ENCODE measurements at regions of chr2 and their contacts with region 1.

Region 1: DNA sequence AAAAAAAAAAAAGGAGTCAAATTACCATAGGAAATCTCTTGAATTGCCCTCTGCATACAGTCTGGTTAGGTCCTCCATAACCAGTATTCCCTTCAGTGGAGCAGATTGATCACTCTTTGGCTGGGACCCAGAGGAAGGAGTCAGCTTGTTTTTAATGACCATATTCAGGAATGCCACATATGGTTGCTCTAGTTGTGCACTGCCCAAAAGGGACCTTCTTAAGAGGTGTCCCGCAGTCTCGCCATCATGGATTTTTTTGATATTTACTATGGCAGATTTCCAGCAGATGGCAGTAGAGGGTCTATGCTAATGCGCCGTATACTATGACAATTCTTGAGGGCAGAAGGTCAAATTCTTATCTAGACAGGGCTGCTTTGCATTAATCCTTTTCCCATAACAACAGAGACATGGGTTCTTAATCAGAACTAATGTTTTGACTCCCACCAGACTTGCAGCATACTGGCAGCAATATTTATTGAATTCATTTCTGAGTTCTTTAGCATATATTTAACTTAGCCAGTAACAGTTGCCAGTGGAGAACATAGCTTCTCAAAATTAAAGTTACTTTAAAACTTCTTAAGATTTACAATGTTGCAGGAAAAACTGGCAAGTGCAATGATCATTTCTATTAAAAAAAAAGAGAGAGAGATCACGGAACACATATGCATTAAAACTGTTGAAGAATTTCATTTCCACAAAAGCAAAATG is 31.8 kb upstream of the INPP4A start:
- DNase-seq: peak; percentile 41
- H3K4me3 ChIP-seq: no peak overlapping the region
- H3K27ac ChIP-seq: no peak overlapping the region
- H3K4me1 ChIP-seq: no peaks in the 10 kb centered on the region
- H3K27me3 ChIP-seq: no peaks in the 10 kb centered on the region
- CTCF ChIP-seq: peak; percentile 39 to 73

Region 2: DNA sequence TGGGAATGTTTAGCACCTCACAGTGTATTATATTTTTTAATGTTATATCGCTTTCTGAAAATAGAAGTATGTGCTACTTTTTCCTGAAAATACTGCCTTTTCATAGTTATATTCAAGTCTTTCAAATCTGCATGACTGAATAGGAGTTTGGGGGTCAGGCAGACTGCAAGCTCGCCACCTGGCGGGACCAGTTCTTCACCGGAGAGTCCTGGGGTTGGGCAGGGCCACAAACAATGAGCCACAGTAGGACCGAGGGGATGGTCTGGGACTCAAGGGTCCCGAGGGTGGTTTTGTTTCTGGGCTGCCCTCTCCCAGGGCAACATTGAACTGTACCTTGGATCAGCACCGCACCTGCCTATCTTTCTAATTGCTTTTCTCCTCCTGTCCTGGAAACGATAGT is 255.3 kb before region 1 on chr2:
- CTCF ChIA-PET with region 1: no interaction called
- dilution Hi-C with region 1: no loop called
- in situ Hi-C with region 1: no loop called
- intact Hi-C with region 1: no loop called
- DNase-seq: no peak
- H3K4me3 ChIP-seq: no peak overlapping the region
- H3K27ac ChIP-seq: no peak overlapping the region
- H3K4me1 ChIP-seq: peaks cover 16% of the 10 kb centered on the region
- H3K27me3 ChIP-seq: no peaks in the 10 kb centered on the region
- CTCF ChIP-seq: no peak

Region 3: GRCh38 chr2:98378930-98379671 is 33.8 kb before region 1 on chr2:
- CTCF ChIA-PET with region 1: no interaction called
- dilution Hi-C with region 1: no loop called
- in situ Hi-C with region 1: no loop called
- intact Hi-C with region 1: no loop called
- DNase-seq: peak; percentile 84
- H3K4me3 ChIP-seq: no peak overlapping the region
- H3K27ac ChIP-seq: no peak overlapping the region
- H3K4me1 ChIP-seq: peaks cover 14% of the 10 kb centered on the region
- H3K27me3 ChIP-seq: peaks cover 28% of the 10 kb centered on the region
- CTCF ChIP-seq: no peak

Region 4: GRCh38 chr2:98444436-98445176 is 31.7 kb after region 1 on chr2 and contains the start of gene INPP4A:
- CTCF ChIA-PET with region 1: no interaction called
- dilution Hi-C with region 1: no loop called
- in situ Hi-C with region 1: no loop called
- intact Hi-C with region 1: no loop called
- DNase-seq: peak; percentile 48
- H3K4me3 ChIP-seq: peak within 1 kb of the TSS; percentile 69 to 88 (median 85)
- H3K27ac ChIP-seq: peak within 1 kb of the TSS; percentile 76
- H3K4me1 ChIP-seq: peaks cover 4% of the 10 kb centered on the region
- H3K27me3 ChIP-seq: no peaks in the 10 kb centered on the region
- CTCF ChIP-seq: peak in 1 of 2 donors; percentile 16
- total RNA-seq, gene INPP4A: 26.3 to 36.5 TPM

Region 5: GRCh38 chr2:98479959-98480524 is 67.1 kb after region 1 on chr2:
- CTCF ChIA-PET with region 1: interaction called, 3 read pairs
- dilution Hi-C with region 1: no loop called
- in situ Hi-C with region 1: no loop called
- intact Hi-C with region 1: loop called (anchors 2 kb)
- DNase-seq: peak; percentile 99
- H3K4me3 ChIP-seq: no peak overlapping the region
- H3K27ac ChIP-seq: peak overlapping the region; percentile 74
- H3K4me1 ChIP-seq: peaks cover 57% of the 10 kb centered on the region
- H3K27me3 ChIP-seq: no peaks in the 10 kb centered on the region
- CTCF ChIP-seq: no peak

Region 6: GRCh38 chr2:98577313-98577712 is 164.4 kb after region 1 on chr2:
- CTCF ChIA-PET with region 1: no interaction called
- dilution Hi-C with region 1: loop called (anchors 25 kb)
- in situ Hi-C with region 1: loop called in 1 of 2 experiments (anchors 25 kb)
- intact Hi-C with region 1: no loop called
- DNase-seq: no peak
- H3K4me3 ChIP-seq: no peak overlapping the region
- H3K27ac ChIP-seq: no peak overlapping the region
- H3K4me1 ChIP-seq: no peaks in the 10 kb centered on the region
- H3K27me3 ChIP-seq: no peaks in the 10 kb centered on the region
- CTCF ChIP-seq: peak in 1 of 2 donors; percentile 10

Region 7: GRCh38 chr2:98601532-98602132 is 188.7 kb after region 1 on chr2:
- CTCF ChIA-PET with region 1: no interaction called
- dilution Hi-C with region 1: loop called (anchors 25 kb)
- in situ Hi-C with region 1: loop called in 1 of 2 experiments (anchors 25 kb)
- intact Hi-C with region 1: loop called (anchors 1 kb)
- DNase-seq: peak; percentile 33
- H3K4me3 ChIP-seq: no peak overlapping the region
- H3K27ac ChIP-seq: no peak overlapping the region
- H3K4me1 ChIP-seq: no peaks in the 10 kb centered on the region
- H3K27me3 ChIP-seq: no peaks in the 10 kb centered on the region
- CTCF ChIP-seq: peak; percentile 45 to 71

Region 8: GRCh38 chr2:98608116-98608999 is 195.5 kb after region 1 on chr2 and contains the starts of genes COA5 and UNC50:
- CTCF ChIA-PET with region 1: no interaction called
- dilution Hi-C with region 1: no loop called
- in situ Hi-C with region 1: no loop called
- intact Hi-C with region 1: loop called (anchors 2 kb)
- DNase-seq: peak; percentile 88
- H3K4me3 ChIP-seq: peak within 1 kb of the TSS; percentile 77 to 92 (median 91)
- H3K27ac ChIP-seq: peak within 1 kb of the TSS; percentile 89
- H3K4me1 ChIP-seq: peaks cover 22% of the 10 kb centered on the region
- H3K27me3 ChIP-seq: no peaks in the 10 kb centered on the region
- CTCF ChIP-seq: peak in 1 of 2 donors; percentile 10
- total RNA-seq, gene COA5: 16.5 to 20.5 TPM
- total RNA-seq, gene UNC50: 33.0 to 38.4 TPM

Region 9: GRCh38 chr2:98649135-98649991 is 236.5 kb after region 1 on chr2:
- CTCF ChIA-PET with region 1: interaction called, 5 read pairs
- dilution Hi-C with region 1: no loop called
- in situ Hi-C with region 1: no loop called
- intact Hi-C with region 1: loop called (anchors 1 kb)
- DNase-seq: peak; percentile 65
- H3K4me3 ChIP-seq: no peak overlapping the region
- H3K27ac ChIP-seq: no peak overlapping the region
- H3K4me1 ChIP-seq: peaks cover 7% of the 10 kb centered on the region
- H3K27me3 ChIP-seq: no peaks in the 10 kb centered on the region
- CTCF ChIP-seq: peak; percentile 99

Region 10: GRCh38 chr2:98835831-98836385 is 423.0 kb after region 1 on chr2:
- CTCF ChIA-PET with region 1: no interaction called
- dilution Hi-C with region 1: no loop called
- in situ Hi-C with region 1: no loop called
- intact Hi-C with region 1: loop called (anchors 2 kb)
- DNase-seq: no peak
- H3K4me3 ChIP-seq: no peak overlapping the region
- H3K27ac ChIP-seq: no peak overlapping the region
- H3K4me1 ChIP-seq: peaks cover 23% of the 10 kb centered on the region
- H3K27me3 ChIP-seq: no peaks in the 10 kb centered on the region
- CTCF ChIP-seq: no peak